ENCODE measurements at regions of chr12 and their contacts with region 1.

Region 1: GRCh38 chr12:12319451-12320183 is 30.4 kb downstream of the MANSC1 start:
- DNase-seq: no peak
- ATAC-seq: peak; percentile 49
- H3K4me3 ChIP-seq: no peak overlapping the region
- H3K27ac ChIP-seq: no peak overlapping the region
- H3K4me1 ChIP-seq: peaks cover 6% of the 10 kb centered on the region; the same call in 1 of the 2 replicates
- H3K27me3 ChIP-seq: no peaks in the 10 kb centered on the region
- CTCF ChIP-seq: no peak
- POLR2A ChIP-seq: no peak
- RAD21 ChIP-seq: no peak

Region 2: DNA sequence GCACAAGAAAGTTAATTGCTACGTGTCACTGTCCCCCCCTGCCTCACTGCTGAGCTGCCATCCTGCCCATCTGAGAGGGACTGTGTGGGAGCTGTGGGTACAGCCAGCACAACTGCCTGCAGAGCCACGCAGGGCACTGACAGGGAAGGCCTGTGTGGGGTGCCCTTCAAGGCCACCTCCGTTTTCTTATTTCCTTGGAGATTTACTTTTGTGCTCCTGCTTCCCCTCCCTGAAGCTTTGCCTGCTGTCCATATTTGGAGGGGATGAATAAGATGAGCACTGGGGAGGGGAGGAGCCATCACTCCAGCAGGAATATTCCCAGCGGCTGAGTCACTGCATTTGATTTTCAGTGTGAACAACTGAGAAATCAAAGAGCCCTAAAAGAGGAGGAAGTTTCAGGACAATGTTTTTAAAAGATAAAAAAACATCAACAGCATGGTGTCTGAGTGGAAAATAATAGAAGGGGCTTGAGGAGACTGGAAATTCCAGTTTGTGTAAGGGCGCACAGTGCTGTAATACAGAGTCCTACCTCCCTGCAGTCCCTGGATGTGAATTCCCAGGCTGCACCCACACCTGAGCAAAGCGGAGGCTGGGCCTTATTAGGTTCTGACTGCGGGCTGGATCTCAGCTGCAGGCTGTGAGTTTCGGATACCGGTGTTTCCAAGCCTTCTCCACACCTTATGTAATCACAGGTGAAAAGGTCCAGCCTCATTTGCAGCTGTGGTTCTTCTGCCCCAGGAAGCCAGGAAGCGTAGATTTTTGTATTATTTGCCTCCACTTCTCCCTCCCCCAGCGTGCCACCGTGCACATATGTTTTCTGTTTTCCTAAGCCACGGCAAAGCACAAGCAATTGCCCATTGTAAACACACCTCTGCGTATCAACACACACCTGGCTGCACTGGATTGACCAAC is 441.5 kb before region 1 on chr12:
- CTCF ChIA-PET with region 1: no interaction called
- POLR2A ChIA-PET with region 1: no interaction called
- dilution Hi-C with region 1: no loop called
- in situ Hi-C with region 1: no loop called
- intact Hi-C with region 1: no loop called
- DNase-seq: peak; percentile 80
- ATAC-seq: peak; percentile 99
- H3K4me3 ChIP-seq: no peak overlapping the region
- H3K27ac ChIP-seq: peak overlapping the region; percentile 63
- H3K4me1 ChIP-seq: peaks cover 7% of the 10 kb centered on the region
- H3K27me3 ChIP-seq: no peaks in the 10 kb centered on the region
- CTCF ChIP-seq: no peak
- POLR2A ChIP-seq: no peak
- RAD21 ChIP-seq: no peak

Region 3: GRCh38 chr12:12272869-12273268 is 46.7 kb before region 1 on chr12:
- CTCF ChIA-PET with region 1: no interaction called
- POLR2A ChIA-PET with region 1: no interaction called
- dilution Hi-C with region 1: no loop called
- in situ Hi-C with region 1: no loop called
- intact Hi-C with region 1: loop called (anchors 2 kb)
- DNase-seq: no peak
- ATAC-seq: peak; percentile 80
- H3K4me3 ChIP-seq: no peak overlapping the region
- H3K27ac ChIP-seq: peak overlapping the region; percentile 60; the same call in 1 of the 2 replicates
- H3K4me1 ChIP-seq: peaks cover 6% of the 10 kb centered on the region
- H3K27me3 ChIP-seq: no peaks in the 10 kb centered on the region
- CTCF ChIP-seq: no peak
- POLR2A ChIP-seq: no peak
- RAD21 ChIP-seq: no peak

Region 4: DNA sequence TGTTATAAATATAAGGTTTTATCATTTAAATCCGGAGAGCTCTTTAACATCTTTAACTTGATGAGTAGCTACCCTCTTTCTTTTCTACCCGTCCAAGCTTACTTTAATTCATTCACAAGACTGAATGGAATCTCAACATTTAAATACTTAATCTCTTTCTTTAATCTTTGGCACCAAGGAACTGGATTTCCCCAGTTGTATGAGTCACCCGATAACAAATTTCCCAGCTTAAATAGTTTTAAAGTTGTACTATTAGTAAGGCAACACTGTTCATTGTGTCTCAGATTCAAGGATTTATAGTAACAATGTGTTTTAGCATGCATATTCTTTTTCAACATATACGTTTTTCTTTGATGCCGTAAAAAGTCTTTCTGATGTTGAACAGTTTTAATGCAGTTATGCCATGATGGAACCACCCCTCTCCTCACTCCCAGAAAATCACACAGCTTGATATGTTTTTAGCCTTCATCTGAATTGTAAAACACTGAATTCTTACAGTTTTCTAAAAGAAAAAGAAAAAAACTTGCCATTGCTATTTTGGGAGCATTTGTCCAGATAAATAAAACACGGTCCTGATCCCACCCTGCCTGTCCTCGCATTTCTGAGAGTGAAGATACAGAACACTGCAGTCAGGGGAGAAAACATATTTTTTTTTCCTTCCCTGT is 36.7 kb before region 1 on chr12:
- CTCF ChIA-PET with region 1: no interaction called
- POLR2A ChIA-PET with region 1: no interaction called
- dilution Hi-C with region 1: no loop called
- in situ Hi-C with region 1: no loop called
- intact Hi-C with region 1: no loop called
- DNase-seq: peak; percentile 85
- ATAC-seq: peak; percentile 90
- H3K4me3 ChIP-seq: no peak overlapping the region
- H3K27ac ChIP-seq: no peak overlapping the region
- H3K4me1 ChIP-seq: peaks cover 7% of the 10 kb centered on the region
- H3K27me3 ChIP-seq: peaks cover 4% of the 10 kb centered on the region
- CTCF ChIP-seq: no peak
- POLR2A ChIP-seq: no peak
- RAD21 ChIP-seq: no peak

Measured in IMR-90 (cell line).